ENCODE measurements at regions of chr6 and their contacts with region 1.

Region 1: GRCh38 chr6:34236131-34236996 is at the start of gene HMGA1:
- DNase-seq: peak; percentile 89 to 95
- ATAC-seq: peak; percentile 66 to 85 (median 77)
- H3K4me3 ChIP-seq: peak within 1 kb of the TSS; percentile 77
- H3K4me3 Mint-ChIP-seq: peak within 1 kb of the TSS; percentile 91
- H3K27ac ChIP-seq: peak within 1 kb of the TSS; percentile 99
- H3K27ac Mint-ChIP-seq: peak within 1 kb of the TSS; percentile 96 to 97
- H3K4me1 ChIP-seq: peaks cover 23% of the 10 kb centered on the region
- H3K4me1 Mint-ChIP-seq: peaks cover 20 to 21% of the 10 kb centered on the region in 2 donors
- H3K27me3 ChIP-seq: no peaks in the 10 kb centered on the region
- H3K27me3 Mint-ChIP-seq: no peaks in the 10 kb centered on the region
- CTCF ChIP-seq: no peak
- total RNA-seq, gene HMGA1: 63.1 to 84.2 (median 77.3) TPM

Region 2: DNA sequence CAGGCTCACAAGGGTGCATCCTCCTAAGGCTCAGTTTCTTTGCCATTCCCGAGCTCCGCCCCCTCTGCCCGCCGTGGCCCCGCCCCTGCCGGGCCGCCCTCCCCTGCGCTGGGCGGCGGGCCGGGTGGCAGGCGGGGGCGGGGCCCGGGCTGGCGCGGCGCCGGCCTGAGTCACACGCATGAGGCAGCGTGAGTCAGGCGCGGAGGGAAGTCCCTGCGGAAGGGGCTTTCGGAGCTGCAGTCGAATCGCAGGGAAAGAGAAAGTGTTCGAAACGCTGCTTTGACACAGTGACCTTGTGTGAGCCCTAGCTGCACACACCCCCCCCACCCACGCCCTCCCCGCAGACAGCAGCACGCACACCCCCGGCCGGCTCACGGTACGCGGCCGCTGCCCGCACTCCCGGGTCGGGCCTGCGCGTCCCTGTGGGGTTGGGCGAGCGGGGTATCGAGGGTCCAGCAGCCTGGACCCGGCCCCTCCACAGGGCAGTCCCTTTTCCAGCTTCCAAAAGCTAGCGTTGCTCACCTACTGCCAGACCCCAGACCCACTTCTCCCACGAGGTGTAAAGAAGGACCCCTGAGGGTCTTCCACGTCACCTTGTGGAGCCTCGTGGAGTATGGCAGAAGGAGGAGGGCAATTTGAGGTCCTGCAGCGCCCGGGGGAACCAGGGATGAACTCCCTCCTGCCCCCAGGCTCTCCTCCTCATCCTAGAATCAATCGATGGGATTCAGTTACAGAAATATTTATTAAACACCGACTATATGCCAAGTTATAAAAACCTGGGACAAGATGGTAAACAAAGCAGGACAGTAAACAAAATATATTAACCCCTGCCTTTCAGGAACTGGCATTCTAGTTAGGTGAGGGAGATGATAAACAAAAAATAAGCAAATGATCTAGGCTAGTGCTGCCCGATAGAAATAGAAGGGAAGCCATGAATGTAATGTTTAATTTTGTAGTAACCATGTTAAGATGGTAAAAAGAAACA is 12.1 kb before region 1 on chr6:
- intact Hi-C with region 1: loop called (anchors 1 kb)
- DNase-seq: peak; percentile 95 to 99
- ATAC-seq: peak; percentile 92 to 99 (median 94)
- H3K4me3 ChIP-seq: peak overlapping the region; percentile 53
- H3K4me3 Mint-ChIP-seq: peak overlapping the region; percentile 49
- H3K27ac ChIP-seq: peak overlapping the region; percentile 95
- H3K27ac Mint-ChIP-seq: peak overlapping the region; percentile 78 to 94
- H3K4me1 ChIP-seq: peaks cover 28% of the 10 kb centered on the region
- H3K4me1 Mint-ChIP-seq: peaks cover 6% of the 10 kb centered on the region in 2 donors
- H3K27me3 ChIP-seq: no peaks in the 10 kb centered on the region
- H3K27me3 Mint-ChIP-seq: peaks cover 0 to 3% of the 10 kb centered on the region in 2 donors
- CTCF ChIP-seq: no peak

Region 3: DNA sequence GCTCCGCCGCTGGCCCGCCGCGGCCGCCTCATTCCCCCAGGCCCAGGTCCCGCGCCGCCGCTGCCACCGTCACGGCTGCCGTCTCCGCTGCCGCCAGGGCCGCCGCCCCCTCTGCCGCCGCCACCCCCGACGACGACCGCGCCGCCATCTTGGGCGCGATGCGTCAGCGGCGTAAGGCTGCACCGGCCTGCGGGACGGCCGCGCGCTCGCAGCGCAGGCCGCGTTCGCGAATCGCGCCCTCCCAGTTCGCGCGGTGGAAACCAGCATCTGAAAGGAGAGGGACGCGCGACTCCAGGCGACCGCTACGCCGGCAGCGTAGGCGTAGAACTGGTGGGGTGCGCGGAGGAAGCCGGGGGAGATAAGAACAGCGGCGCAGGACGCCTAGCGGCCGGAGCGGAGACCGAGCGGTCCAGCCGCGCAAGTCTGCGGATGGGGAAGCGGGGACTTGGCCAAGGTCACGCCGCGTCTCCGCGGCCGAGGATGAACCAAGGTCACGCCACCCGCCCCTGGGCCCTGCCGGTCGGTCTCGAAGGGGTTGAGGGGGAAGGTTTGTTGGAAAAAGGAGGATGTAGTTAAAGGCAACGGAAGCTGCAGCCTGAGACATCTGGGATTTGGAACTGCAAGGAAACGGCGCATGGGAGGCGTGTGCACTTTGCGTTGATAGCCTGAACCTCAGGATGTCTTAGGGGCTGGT is 156.3 kb after region 1 on chr6 and contains the start of gene NUDT3:
- intact Hi-C with region 1: loop called (anchors 5 kb)
- DNase-seq: peak; percentile 93 to 98
- ATAC-seq: peak; percentile 86 to 95 (median 88)
- H3K4me3 ChIP-seq: peak within 1 kb of the TSS; percentile 58
- H3K4me3 Mint-ChIP-seq: peak within 1 kb of the TSS; percentile 50
- H3K27ac ChIP-seq: peak within 1 kb of the TSS; percentile 65
- H3K27ac Mint-ChIP-seq: peak within 1 kb of the TSS in 1 of 2 donors; percentile 45
- H3K4me1 ChIP-seq: peaks cover 17% of the 10 kb centered on the region
- H3K4me1 Mint-ChIP-seq: peaks cover 9 to 22% of the 10 kb centered on the region in 2 donors
- H3K27me3 ChIP-seq: no peaks in the 10 kb centered on the region
- H3K27me3 Mint-ChIP-seq: no peaks in the 10 kb centered on the region
- CTCF ChIP-seq: peak; percentile 77
- total RNA-seq, gene NUDT3: 22.0 to 26.3 (median 26.1) TPM

Measured in natural killer cell (primary cell).